Natural killer cell (primary cell): ENCODE measurements at regions of chr19 and their contacts with region 1.

Region 1: GRCh38 chr19:38676023-38676877 is 28.8 kb downstream of the ACTN4 start:
- DNase-seq: no peak
- ATAC-seq: no peak
- H3K4me3 ChIP-seq: no peak overlapping the region
- H3K4me3 Mint-ChIP-seq: peak overlapping the region; percentile 77
- H3K27ac ChIP-seq: peak overlapping the region; percentile 67
- H3K27ac Mint-ChIP-seq: peak overlapping the region; percentile 98 to 100
- H3K4me1 ChIP-seq: peaks cover 88% of the 10 kb centered on the region
- H3K4me1 Mint-ChIP-seq: peaks cover 81 to 88% of the 10 kb centered on the region in 2 donors
- H3K27me3 ChIP-seq: no peaks in the 10 kb centered on the region
- H3K27me3 Mint-ChIP-seq: no peaks in the 10 kb centered on the region
- CTCF ChIP-seq: no peak

Region 2: DNA sequence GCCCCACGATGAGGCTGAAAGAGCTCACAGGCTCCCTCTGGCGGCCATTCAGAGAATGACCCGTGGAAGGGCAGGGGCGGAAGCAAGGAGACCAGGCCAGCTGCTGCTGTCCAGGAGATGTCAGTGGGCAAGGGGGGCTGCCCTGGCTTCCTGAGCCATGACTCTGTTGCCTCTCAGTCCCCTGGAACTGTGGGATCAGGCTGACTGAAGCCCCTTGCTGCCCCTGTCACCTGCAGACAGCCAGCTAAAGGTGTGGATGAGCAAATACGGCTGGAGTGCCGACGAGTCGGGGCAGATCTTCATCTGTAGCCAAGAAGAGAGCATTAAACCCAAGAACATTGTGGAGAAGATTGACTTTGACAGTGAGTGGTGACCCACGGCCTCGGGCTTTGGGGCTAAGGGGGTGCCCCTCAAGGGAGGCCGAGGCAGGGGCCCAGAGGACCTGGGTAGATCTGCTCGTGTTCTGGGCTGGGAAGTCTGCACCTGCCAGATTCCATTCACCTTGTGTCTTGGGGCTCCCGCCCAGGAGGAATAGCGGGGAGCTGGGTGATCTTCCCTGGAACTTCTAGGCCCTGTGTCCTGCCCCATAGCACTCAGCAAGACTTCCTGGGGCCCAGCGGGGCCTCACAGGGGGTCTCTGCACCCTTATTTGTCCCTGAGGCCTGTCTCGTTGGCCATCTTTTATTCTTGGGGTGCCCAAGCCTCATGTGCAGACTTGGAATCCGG is 41.3 kb before region 1 on chr19:
- intact Hi-C with region 1: no loop called
- DNase-seq: peak; percentile 75 to 85
- ATAC-seq: peak; percentile 49 to 71 (median 53)
- H3K4me3 ChIP-seq: no peak overlapping the region
- H3K4me3 Mint-ChIP-seq: peak overlapping the region; percentile 73
- H3K27ac ChIP-seq: peak overlapping the region; percentile 24
- H3K27ac Mint-ChIP-seq: peak overlapping the region; percentile 93 to 97
- H3K4me1 ChIP-seq: peaks cover 31% of the 10 kb centered on the region
- H3K4me1 Mint-ChIP-seq: peaks cover 32 to 33% of the 10 kb centered on the region in 2 donors
- H3K27me3 ChIP-seq: no peaks in the 10 kb centered on the region
- H3K27me3 Mint-ChIP-seq: no peaks in the 10 kb centered on the region
- CTCF ChIP-seq: peak; percentile 97

Region 3: DNA sequence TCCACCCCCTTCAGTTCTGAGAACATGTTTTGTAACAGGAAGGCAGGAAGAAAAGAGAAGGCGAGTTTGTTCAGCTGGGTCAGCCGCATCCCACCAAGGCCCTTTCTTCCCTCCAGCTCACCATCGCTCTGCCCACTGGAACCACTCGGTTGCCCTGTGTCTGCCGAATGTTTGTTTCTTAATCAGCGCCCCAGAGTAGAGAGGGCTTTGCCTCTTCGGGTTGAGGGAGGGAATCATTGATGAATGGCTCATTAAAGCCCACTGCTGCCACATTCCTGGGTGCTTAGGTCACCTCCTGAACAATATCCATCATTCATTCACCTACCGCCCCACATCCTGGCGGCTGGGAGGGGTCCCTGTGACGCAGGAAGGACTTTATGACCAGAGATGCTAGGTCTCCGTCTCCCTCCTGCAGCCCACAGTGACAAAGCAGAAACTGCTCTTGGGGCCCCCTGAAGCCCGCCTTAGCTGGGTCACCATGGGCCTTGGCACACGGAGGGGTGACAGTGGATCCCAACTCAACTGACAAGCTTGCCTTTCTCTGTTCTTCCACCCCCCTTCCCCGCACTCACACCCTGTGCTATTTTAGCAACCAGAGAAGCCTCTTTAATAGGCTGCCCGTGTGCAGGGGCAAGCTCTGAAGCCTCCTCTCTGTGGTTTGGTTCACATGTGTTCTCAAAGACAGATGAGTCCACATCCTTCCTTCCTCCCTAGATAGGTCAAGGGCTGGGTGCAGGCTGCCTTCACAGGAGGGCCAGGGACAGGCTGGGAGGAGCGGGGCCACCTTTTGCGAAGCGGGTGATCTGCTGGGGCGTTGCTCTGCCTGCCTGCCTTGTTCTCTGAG is 17.4 kb after region 1 on chr19:
- intact Hi-C with region 1: loop called (anchors 2 kb)
- DNase-seq: peak; percentile 58 to 75
- ATAC-seq: peak; percentile 74 to 88 (median 85)
- H3K4me3 ChIP-seq: peak overlapping the region; percentile 10
- H3K4me3 Mint-ChIP-seq: peak overlapping the region; percentile 75
- H3K27ac ChIP-seq: peak overlapping the region; percentile 81
- H3K27ac Mint-ChIP-seq: peak overlapping the region; percentile 89 to 93
- H3K4me1 ChIP-seq: peaks cover 94% of the 10 kb centered on the region
- H3K4me1 Mint-ChIP-seq: peaks cover 86 to 91% of the 10 kb centered on the region in 2 donors
- H3K27me3 ChIP-seq: no peaks in the 10 kb centered on the region
- H3K27me3 Mint-ChIP-seq: no peaks in the 10 kb centered on the region
- CTCF ChIP-seq: no peak

Region 4: GRCh38 chr19:38718747-38719543 is 42.7 kb after region 1 on chr19:
- intact Hi-C with region 1: no loop called
- DNase-seq: no peak
- ATAC-seq: peak in 1 of 3 donors; percentile 3
- H3K4me3 ChIP-seq: no peak overlapping the region
- H3K4me3 Mint-ChIP-seq: no peak overlapping the region
- H3K27ac ChIP-seq: no peak overlapping the region
- H3K27ac Mint-ChIP-seq: no peak overlapping the region
- H3K4me1 ChIP-seq: no peaks in the 10 kb centered on the region
- H3K4me1 Mint-ChIP-seq: peaks cover 0 to 3% of the 10 kb centered on the region in 2 donors
- H3K27me3 ChIP-seq: no peaks in the 10 kb centered on the region
- H3K27me3 Mint-ChIP-seq: no peaks in the 10 kb centered on the region
- CTCF ChIP-seq: no peak

Region 5: DNA sequence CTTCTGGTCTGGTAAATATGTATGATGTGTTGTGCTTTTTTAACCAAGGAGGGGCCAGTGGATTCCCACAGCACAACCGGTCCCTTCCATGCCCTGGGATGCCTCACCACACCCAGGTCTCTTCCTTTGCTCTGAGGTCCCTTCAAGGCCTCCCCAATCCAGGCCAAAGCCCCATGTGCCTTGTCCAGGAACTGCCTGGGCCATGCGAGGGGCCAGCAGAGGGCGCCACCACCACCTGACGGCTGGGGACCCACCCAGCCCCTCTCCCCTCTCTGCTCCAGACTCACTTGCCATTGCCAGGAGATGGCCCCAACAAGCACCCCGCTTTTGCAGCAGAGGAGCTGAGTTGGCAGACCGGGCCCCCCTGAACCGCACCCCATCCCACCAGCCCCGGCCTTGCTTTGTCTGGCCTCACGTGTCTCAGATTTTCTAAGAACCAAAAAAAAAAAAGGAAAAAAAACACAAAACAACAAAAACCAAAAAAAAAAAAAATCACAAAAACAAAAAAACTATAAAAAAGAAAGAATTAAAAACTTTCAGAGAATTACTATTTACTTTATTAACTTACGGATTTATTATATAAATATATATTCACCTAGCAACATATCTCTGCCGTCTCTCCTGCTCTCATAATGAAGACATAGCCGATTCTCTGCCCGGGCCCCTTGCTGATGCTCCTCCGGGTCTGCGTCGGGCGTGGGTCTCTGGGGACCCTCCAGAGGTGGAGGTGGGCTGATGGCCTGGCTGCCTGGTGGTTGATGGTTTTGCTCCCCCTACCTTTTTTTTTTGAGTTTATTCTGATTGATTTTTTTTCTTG is 53.6 kb after region 1 on chr19:
- intact Hi-C with region 1: loop called (anchors 2 kb)
- DNase-seq: peak; percentile 72 to 84
- ATAC-seq: peak; percentile 18 to 52 (median 38)
- H3K4me3 ChIP-seq: no peak overlapping the region
- H3K4me3 Mint-ChIP-seq: peak overlapping the region; percentile 72
- H3K27ac ChIP-seq: no peak overlapping the region
- H3K27ac Mint-ChIP-seq: peak overlapping the region; percentile 80 to 84
- H3K4me1 ChIP-seq: peaks cover 90% of the 10 kb centered on the region
- H3K4me1 Mint-ChIP-seq: peaks cover 61 to 77% of the 10 kb centered on the region in 2 donors
- H3K27me3 ChIP-seq: no peaks in the 10 kb centered on the region
- H3K27me3 Mint-ChIP-seq: no peaks in the 10 kb centered on the region
- CTCF ChIP-seq: peak; percentile 83

Region 6: GRCh38 chr19:38849860-38850435 is 173.7 kb after region 1 on chr19 and contains the start of gene HNRNPL:
- intact Hi-C with region 1: loop called (anchors 5 kb)
- DNase-seq: peak in 1 of 2 donors; percentile 98
- ATAC-seq: peak; percentile 58 to 85 (median 69)
- H3K4me3 ChIP-seq: peak within 1 kb of the TSS; percentile 84
- H3K4me3 Mint-ChIP-seq: peak within 1 kb of the TSS; percentile 96
- H3K27ac ChIP-seq: peak within 1 kb of the TSS; percentile 97
- H3K27ac Mint-ChIP-seq: peak within 1 kb of the TSS; percentile 99 to 100
- H3K4me1 ChIP-seq: peaks cover 61% of the 10 kb centered on the region
- H3K4me1 Mint-ChIP-seq: peaks cover 59 to 69% of the 10 kb centered on the region in 2 donors
- H3K27me3 ChIP-seq: no peaks in the 10 kb centered on the region
- H3K27me3 Mint-ChIP-seq: no peaks in the 10 kb centered on the region
- CTCF ChIP-seq: peak; percentile 26
- total RNA-seq, gene HNRNPL: 636 to 800 (median 702) TPM